ENCODE measurements at regions of chr5 and their contacts with region 1.

Region 1: DNA sequence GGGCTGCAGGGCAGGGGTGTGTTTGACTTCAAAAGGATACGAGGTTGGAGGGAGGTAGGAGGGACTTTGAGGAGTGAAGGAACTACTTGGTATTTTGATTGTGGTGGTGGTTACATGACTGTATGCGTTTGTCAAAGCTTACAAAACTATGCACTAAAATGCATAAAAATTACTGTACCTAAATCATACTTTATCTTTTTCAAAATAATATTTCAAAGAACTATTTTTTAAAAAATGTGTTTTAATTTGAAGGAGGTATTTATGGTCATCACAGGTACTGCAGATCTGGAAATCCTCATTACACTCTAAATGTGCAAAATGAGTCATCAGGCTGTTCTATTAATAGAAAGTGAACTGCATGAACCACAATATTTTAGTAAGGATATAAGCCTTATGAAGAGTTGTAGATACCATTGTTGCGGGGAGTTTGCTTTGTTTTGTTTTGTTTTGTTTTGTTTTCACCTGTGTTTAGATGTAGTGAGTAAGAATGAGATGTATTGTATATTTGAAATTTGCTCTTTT is 116.9 kb downstream of the ARRDC3 start:
- DNase-seq: no peak
- H3K4me3 ChIP-seq: no peak overlapping the region
- H3K27ac ChIP-seq: peak overlapping the region in 3 of 4 donors; percentile 58 to 67 (median 62)
- H3K4me1 ChIP-seq: peaks cover 0 to 27% (median 12%) of the 10 kb centered on the region in 4 donors
- H3K27me3 ChIP-seq: no peaks in the 10 kb centered on the region
- CTCF ChIP-seq: peak in 3 of 4 experiments; percentile 5 to 45 (median 33)
- EP300 ChIP-seq: peak in 1 of 4 donors; percentile 5
- POLR2A ChIP-seq: no peak

Region 2: GRCh38 chr5:91119981-91120850 is 146.0 kb before region 1 on chr5:
- intact Hi-C with region 1: loop called (anchors 5 kb)
- DNase-seq: peak; percentile 82
- H3K4me3 ChIP-seq: no peak overlapping the region
- H3K27ac ChIP-seq: peak overlapping the region; percentile 62 to 78 (median 69)
- H3K4me1 ChIP-seq: peaks cover 0 to 60% (median 47%) of the 10 kb centered on the region in 4 donors
- H3K27me3 ChIP-seq: no peaks in the 10 kb centered on the region
- CTCF ChIP-seq: no peak
- EP300 ChIP-seq: no peak
- POLR2A ChIP-seq: no peak